ENCODE measurements at regions of chr17 and their contacts with region 1.

Region 1: DNA sequence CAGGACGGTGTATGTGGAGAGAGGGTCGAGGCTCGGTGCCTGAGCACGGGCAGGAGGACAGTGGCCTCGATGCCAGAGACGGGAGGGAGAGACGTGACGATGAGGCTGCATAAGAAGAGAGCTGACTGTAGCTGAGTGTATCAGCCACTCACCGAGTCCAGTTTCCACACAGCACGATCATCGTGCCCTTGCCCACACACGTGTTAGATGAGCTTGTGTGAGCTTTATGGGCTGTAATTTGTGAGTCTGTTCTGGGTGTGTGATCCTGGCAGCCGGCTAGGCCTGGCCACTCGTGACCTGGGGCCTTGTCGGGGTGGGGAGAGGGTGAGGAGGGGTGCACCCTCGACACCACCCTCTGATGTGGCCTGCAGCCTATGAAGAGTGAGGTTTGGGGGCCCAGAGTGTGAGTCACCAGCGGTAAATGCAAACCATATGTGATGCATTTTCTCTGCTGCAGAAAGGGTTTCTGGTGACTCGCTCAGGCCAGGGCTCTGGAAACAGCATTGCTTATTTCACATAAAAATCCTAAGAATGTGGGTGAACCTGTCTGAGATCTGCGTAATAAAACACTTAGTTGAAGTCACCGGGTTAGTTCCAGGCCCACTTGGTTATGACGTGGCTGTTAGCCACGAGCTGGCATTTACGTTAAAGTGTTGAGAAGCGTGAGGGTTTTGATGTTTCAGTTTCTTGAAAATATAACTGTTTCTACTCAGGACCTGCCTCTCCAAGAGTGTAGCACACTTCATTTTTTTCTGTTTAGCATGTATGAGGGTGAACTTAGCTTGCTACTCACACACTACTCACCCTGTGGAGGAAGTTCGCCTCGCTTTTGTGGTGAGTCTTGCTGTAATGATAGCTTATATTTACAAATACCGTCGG is 4.2 kb downstream of the METRNL start:
- DNase-seq: peak; percentile 51
- H3K4me3 Mint-ChIP-seq: peak overlapping the region; percentile 40
- H3K27ac Mint-ChIP-seq: peak overlapping the region; percentile 80
- H3K4me1 Mint-ChIP-seq: peaks cover 49% of the 10 kb centered on the region
- H3K27me3 Mint-ChIP-seq: peaks cover 17% of the 10 kb centered on the region

Region 2: GRCh38 chr17:83109793-83110645 is 26.5 kb after region 1 on chr17:
- CTCF ChIA-PET with region 1: no interaction called
- POLR2A ChIA-PET with region 1: no interaction called
- DNase-seq: no peak
- H3K4me3 Mint-ChIP-seq: no peak overlapping the region
- H3K27ac Mint-ChIP-seq: no peak overlapping the region
- H3K4me1 Mint-ChIP-seq: no peaks in the 10 kb centered on the region
- H3K27me3 Mint-ChIP-seq: peaks cover 17% of the 10 kb centered on the region

Region 3: GRCh38 chr17:83119987-83120864 is 36.7 kb after region 1 on chr17:
- CTCF ChIA-PET with region 1: no interaction called
- POLR2A ChIA-PET with region 1: no interaction called
- DNase-seq: peak; percentile 45
- H3K4me3 Mint-ChIP-seq: peak overlapping the region; percentile 50
- H3K27ac Mint-ChIP-seq: no peak overlapping the region
- H3K4me1 Mint-ChIP-seq: peaks cover 26% of the 10 kb centered on the region
- H3K27me3 Mint-ChIP-seq: peaks cover 43% of the 10 kb centered on the region

Region 4: DNA sequence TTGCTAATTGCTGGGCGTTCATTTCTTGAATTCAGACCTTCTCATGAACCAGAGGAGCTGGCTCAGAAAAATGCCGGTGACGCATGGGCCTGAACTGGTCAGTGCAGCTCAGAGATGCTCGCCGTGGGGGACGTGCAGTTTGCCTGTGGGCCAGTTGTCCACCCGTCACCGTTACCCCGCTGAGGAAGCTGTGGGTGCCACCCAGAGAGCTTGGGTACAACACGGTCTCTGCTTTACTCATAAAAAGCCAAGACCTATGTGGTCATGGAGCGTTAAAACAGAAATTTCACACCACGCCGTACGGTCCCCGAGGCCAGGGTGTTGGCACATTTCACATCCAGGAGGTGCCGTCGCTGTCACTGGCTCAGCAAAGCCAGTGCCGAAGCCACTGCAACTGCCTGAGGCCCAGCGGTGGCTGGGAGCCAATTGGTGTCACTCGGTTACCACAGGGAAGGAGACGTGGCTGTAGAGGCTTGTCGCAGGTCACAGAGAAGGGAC is 116.7 kb after region 1 on chr17:
- CTCF ChIA-PET with region 1: no interaction called
- POLR2A ChIA-PET with region 1: interaction called, 11 read pairs
- DNase-seq: peak; percentile 83
- H3K4me3 Mint-ChIP-seq: peak overlapping the region; percentile 67
- H3K27ac Mint-ChIP-seq: peak overlapping the region; percentile 98
- H3K4me1 Mint-ChIP-seq: peaks cover 70% of the 10 kb centered on the region
- H3K27me3 Mint-ChIP-seq: no peaks in the 10 kb centered on the region